Endothelial cell of umbilical vein (primary cell): ENCODE measurements at regions of chr1 and their contacts with region 1.

Region 1: DNA sequence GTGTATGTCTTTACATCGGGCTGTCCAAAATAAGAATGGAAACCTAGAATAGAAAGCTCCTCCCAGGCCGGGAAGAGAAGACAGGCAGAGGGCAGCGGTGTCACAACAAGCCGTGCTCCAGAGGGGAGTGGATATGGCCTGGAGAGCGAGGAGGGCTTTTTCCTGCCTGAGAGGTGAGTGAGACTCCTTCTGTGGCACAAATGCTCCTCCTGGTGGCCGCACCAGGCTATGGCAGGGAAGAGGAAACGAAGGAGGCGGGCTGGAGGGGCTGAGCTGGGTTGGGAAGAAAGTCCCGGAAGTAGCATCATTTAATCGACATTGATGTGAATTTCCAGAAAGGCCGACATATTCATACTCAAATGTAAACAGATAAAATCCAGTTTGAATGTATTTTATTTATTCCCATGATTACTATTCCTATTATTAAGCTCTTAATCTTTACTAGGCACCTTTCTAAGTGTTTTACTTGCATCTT is 54.7 kb downstream of the MEF2D start:
- DNase-seq: peak; percentile 77
- H3K4me3 ChIP-seq: no peak overlapping the region
- H3K27ac ChIP-seq: no peak overlapping the region
- H3K4me1 ChIP-seq: no peaks in the 10 kb centered on the region
- H3K27me3 ChIP-seq: peaks cover 39 to 46% of the 10 kb centered on the region in 2 experiments
- CTCF ChIP-seq: peak; percentile 89 to 95
- POLR2A ChIP-seq: no peak

Region 2: DNA sequence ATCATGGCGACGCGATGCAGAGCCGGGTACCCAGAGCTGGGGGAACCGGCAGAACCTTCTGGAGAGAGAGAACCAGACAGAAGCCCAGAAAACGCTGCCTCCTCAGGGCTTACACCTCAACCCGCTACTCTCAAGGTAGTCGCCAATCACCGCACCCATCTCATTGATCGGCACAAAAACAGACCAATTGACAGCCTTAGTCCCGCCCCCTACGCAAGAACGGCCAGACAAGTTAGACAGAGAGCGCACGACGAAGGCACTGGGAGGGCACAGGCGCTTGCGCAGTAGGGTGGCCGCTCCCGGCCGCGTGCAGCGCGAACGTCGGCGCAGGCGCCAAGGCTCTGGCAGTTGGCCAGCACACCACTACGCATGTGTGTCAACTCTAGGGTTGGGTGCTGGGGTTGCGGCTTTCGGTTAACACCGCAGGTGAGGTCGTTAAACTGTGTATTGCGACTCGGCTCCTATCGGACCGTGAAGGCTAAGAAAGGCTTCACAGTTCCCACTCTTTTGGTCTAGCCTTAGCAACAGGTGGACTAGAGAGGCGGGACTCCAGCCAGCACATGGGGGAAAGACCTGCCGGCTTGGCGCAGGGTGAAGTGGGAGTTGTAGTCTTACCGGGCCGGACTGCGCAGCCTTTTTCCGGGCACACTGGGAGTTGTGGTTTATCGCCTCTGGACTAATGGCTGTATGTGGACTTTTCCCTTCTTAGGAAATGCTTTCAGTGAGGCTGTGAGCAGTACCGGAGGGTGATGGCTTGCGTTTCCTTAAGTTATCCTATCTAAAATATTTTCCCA is 107.4 kb before region 1 on chr1 and contains the starts of genes CCT3 and TSACC:
- CTCF ChIA-PET with region 1: interaction called, 11 read pairs
- POLR2A ChIA-PET with region 1: no interaction called
- dilution Hi-C with region 1: no loop called
- intact Hi-C with region 1: no loop called
- DNase-seq: peak; percentile 100
- H3K4me3 ChIP-seq: peak within 1 kb of the TSS; percentile 57 to 92 (median 57)
- H3K27ac ChIP-seq: peak within 1 kb of the TSS; percentile 9
- H3K4me1 ChIP-seq: peaks cover 15% of the 10 kb centered on the region
- H3K27me3 ChIP-seq: peaks cover 2 to 3% of the 10 kb centered on the region in 2 experiments
- CTCF ChIP-seq: no peak
- POLR2A ChIP-seq: peak; percentile 93
- total RNA-seq, gene CCT3: 330 and 367 TPM in 2 replicates
- total RNA-seq, gene TSACC: 0.69 TPM in 1 of 2 replicates, not detected in the other

Region 3: DNA sequence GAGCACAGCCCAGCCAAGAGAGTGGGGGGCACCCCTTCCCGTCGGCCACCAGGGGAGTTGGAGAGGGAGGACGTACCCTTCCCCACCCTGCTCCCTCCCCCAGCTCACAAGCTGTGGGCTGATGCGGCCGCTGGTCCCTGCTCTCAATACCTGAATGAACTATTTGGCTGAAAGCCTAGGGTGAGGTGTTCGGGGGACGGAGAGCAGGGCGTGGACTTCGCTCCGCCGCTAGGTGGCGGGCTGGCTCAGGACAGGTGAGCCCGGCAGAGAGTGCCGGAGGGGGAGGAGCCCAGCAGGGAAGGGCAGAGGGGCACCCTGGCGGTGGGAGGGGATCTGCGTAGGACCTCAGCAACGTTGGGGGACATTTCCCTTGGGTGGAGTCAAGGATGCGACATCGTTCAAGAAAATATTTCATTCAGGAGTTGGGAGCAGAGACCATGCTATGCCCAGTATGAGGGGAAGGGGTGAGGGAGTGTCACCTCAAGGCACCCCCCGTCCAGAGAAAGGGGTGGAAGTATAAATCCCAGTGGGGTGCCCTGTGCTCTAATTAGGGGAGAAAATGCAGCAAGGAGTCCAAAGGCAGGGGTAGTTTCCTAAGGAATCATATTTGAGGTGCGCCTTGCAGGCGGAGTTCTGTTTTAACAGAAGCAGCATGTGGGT is 88.8 kb before region 1 on chr1:
- CTCF ChIA-PET with region 1: interaction called, 34 read pairs
- POLR2A ChIA-PET with region 1: no interaction called
- dilution Hi-C with region 1: no loop called
- intact Hi-C with region 1: no loop called
- DNase-seq: peak; percentile 23
- H3K4me3 ChIP-seq: no peak overlapping the region
- H3K27ac ChIP-seq: no peak overlapping the region
- H3K4me1 ChIP-seq: no peaks in the 10 kb centered on the region
- H3K27me3 ChIP-seq: peaks cover 17 to 28% of the 10 kb centered on the region in 2 experiments
- CTCF ChIP-seq: peak; percentile 60 to 84
- POLR2A ChIP-seq: no peak

Region 4: GRCh38 chr1:156388174-156389137 is 57.4 kb before region 1 on chr1:
- CTCF ChIA-PET with region 1: interaction called, 648 read pairs
- POLR2A ChIA-PET with region 1: interaction called, 4 read pairs
- dilution Hi-C with region 1: no loop called
- intact Hi-C with region 1: loop called (anchors 1 kb)
- DNase-seq: no peak
- H3K4me3 ChIP-seq: no peak overlapping the region
- H3K27ac ChIP-seq: no peak overlapping the region
- H3K4me1 ChIP-seq: peaks cover 3% of the 10 kb centered on the region
- H3K27me3 ChIP-seq: peaks cover 26 to 36% of the 10 kb centered on the region in 2 experiments
- CTCF ChIP-seq: no peak
- POLR2A ChIP-seq: no peak

Region 5: DNA sequence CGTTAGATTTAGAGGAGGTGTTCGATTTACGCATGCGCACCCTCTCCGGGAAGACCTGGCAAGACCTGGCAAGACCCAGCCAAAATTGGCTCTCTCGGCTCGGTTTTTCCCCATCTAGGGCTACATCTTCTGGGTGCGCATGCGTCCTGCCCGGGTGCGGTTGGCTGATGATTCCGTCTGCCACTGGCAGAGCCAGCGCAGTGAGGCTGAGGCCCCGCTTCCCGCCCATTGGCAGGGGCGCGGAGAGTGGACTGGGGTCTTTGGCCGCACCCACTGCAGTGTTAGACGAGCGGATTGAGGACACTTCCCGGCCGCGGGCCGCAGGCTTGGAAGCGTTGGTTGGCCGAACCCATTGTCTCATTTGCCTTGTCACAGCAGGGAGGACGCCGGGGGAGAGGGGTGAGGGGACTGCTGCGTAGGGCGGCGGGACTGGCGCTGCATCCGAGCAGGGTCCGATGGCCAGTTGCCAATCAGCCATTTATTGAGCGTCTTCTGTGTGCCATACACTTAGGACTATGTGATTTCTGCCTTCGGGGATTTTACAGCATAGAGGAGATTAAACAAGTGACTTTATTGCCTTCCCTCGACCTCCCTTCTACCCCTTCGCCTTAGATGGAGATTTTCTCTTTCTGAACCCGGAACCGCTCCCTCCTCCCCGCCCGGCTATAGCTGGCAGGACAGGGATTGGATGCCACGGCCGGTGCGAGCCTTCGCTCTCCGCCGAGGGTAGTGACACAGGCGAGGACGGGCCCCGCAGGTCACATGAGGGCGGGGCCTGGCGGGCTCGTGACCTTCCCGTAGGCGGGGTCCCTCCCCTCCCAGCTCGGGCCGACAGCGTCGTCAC is 11.0 kb after region 1 on chr1:
- CTCF ChIA-PET with region 1: interaction called, 30 read pairs
- POLR2A ChIA-PET with region 1: no interaction called
- dilution Hi-C with region 1: no loop called
- intact Hi-C with region 1: no loop called
- DNase-seq: peak; percentile 95
- H3K4me3 ChIP-seq: peak overlapping the region; percentile 11 to 73 (median 31)
- H3K27ac ChIP-seq: peak overlapping the region; percentile 80
- H3K4me1 ChIP-seq: peaks cover 11% of the 10 kb centered on the region
- H3K27me3 ChIP-seq: peaks cover 6 to 10% of the 10 kb centered on the region in 2 experiments
- CTCF ChIP-seq: no peak
- POLR2A ChIP-seq: peak; percentile 80

Region 6: DNA sequence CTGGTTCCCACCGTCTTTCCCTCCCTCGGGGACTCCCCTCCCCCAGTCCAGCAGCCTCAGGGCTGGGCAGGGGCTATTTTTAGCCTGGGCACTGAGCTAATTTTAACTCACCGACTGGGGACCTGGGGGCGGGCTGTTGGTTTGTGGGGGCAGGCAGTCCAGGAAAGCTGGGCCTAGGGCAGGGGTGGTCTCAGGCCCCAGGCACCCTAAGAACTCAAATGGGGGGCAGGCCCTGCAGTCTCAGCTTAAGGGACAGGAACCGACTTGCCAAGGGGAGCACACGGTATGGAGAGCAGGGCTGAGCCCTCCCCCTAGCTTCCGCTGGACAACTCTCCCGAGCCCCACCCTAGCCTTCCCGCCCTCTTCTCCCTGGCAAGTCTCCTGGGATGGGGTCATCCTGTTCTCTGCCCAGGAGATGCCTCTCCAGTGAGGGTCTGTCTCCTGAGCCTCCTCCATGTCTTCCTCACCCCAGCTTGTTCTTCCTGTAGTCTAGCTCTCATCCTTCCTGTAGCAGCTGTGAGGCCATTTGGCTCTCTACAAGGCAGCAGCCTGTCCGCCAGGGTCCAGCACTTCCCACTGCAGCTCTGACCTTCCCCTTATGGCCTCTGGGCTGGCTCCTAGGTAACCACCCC is 44.7 kb after region 1 on chr1:
- CTCF ChIA-PET with region 1: no interaction called
- POLR2A ChIA-PET with region 1: no interaction called
- dilution Hi-C with region 1: no loop called
- intact Hi-C with region 1: no loop called
- DNase-seq: no peak
- H3K4me3 ChIP-seq: no peak overlapping the region
- H3K27ac ChIP-seq: peak overlapping the region; percentile 10
- H3K4me1 ChIP-seq: peaks cover 21% of the 10 kb centered on the region
- H3K27me3 ChIP-seq: no peaks in the 10 kb centered on the region
- CTCF ChIP-seq: peak in 1 of 2 donors; percentile 3
- POLR2A ChIP-seq: no peak